ENCODE measurements at regions of chr5 and their contacts with region 1.

Region 1: DNA sequence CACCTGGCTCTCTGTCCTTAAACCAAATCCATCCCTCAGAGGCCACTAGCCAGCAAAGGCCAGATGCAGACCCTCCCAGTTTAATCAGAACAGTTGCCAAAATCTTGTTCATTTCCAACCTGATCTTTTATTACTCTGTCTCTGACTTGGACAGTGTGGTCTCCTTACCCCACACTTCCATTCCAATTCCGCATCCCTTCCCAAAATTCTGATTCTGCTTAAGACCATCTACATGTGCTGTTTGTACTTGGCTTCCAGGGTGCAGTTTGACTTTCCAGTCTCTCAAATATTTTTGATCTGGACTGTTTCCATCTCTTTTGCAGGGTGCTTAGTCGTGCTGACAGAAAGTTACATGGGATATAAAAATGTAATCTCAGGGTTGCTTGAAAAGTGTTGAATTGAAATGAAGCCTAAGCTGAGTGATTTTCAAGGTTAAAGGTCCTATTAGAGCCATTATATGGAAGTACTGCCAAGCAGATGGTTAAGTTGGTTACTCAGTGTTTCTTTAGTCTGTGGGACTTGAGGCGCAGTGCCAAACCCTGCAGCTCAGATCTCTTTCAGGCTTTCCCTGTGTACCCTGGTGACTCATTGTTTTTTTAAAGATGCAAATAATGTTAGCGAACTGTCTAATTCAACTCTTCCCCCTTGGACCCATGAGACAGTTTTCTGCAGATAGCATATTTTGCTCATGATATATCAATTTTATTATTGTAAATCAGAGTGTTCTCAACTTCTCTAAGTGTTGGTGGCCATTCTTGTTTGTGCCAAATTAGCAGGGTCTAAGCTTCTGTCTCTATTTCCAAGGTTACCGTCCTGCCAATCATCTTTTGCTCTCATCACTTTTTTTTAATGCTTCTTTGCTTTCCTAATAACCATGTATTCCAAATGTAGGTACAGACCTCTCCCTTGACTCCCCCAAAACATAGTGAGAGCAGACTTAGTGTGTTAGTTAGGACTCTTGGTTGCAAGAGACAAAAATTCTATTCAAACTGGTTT is 18.2 kb upstream of the DCP2 start:
- DNase-seq: peak; percentile 60
- ATAC-seq: peak; percentile 91
- H3K4me3 Mint-ChIP-seq: no peak overlapping the region
- H3K27ac Mint-ChIP-seq: no peak overlapping the region
- H3K4me1 Mint-ChIP-seq: peaks cover 36% of the 10 kb centered on the region
- H3K27me3 Mint-ChIP-seq: no peaks in the 10 kb centered on the region

Region 2: DNA sequence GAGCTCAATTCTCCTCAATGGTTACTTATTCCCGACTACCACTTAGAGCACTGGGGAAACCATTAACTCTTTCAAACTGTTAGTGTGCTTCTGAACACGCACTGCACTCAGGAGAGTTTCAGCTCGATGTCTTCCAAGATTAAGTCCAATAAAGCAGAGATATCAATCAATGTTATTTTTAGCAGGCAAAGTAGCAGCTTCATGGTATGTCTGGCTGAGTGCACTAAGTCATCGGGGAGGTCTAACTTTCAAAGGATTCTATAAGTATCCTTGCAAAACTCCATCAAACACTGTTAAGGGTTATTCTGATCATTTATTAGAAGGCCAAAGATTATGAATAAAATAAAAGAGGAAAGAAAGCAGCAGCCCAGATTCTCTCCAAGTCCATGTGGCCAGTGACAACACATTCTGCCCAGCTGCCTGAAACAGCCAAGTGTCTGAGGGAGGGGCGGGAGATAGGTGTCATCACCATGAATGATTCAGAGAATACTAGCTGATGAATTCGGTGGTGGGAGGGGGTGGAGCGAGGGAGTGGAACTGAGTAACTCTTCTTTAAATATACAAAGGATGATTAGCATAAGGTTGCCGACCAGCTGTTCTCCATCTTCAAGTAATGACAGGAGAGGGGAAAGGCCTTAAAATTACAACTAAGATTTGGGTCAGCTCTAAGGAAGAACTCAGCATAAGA is 1222.7 kb before region 1 on chr5:
- CTCF ChIA-PET with region 1: no interaction called
- POLR2A ChIA-PET with region 1: no interaction called
- intact Hi-C with region 1: no loop called
- DNase-seq: peak; percentile 80
- ATAC-seq: peak; percentile 90
- H3K4me3 Mint-ChIP-seq: no peak overlapping the region
- H3K27ac Mint-ChIP-seq: no peak overlapping the region
- H3K4me1 Mint-ChIP-seq: peaks cover 24% of the 10 kb centered on the region
- H3K27me3 Mint-ChIP-seq: no peaks in the 10 kb centered on the region

Region 3: GRCh38 chr5:112878760-112879159 is 79.6 kb before region 1 on chr5:
- CTCF ChIA-PET with region 1: interaction called, 5 read pairs
- POLR2A ChIA-PET with region 1: no interaction called
- intact Hi-C with region 1: loop called (anchors 2 to 5 kb)
- DNase-seq: peak; percentile 76
- ATAC-seq: peak; percentile 93
- H3K4me3 Mint-ChIP-seq: peak overlapping the region; percentile 19
- H3K27ac Mint-ChIP-seq: peak overlapping the region; percentile 79
- H3K4me1 Mint-ChIP-seq: peaks cover 27% of the 10 kb centered on the region
- H3K27me3 Mint-ChIP-seq: no peaks in the 10 kb centered on the region

Region 4: GRCh38 chr5:112933651-112934365 is 24.6 kb before region 1 on chr5:
- CTCF ChIA-PET with region 1: no interaction called
- POLR2A ChIA-PET with region 1: no interaction called
- intact Hi-C with region 1: no loop called
- DNase-seq: no peak
- ATAC-seq: peak; percentile 42
- H3K4me3 Mint-ChIP-seq: no peak overlapping the region
- H3K27ac Mint-ChIP-seq: no peak overlapping the region
- H3K4me1 Mint-ChIP-seq: peaks cover 37% of the 10 kb centered on the region
- H3K27me3 Mint-ChIP-seq: no peaks in the 10 kb centered on the region